ENCODE measurements at regions of chr5 and their contacts with region 1.

Region 1: DNA sequence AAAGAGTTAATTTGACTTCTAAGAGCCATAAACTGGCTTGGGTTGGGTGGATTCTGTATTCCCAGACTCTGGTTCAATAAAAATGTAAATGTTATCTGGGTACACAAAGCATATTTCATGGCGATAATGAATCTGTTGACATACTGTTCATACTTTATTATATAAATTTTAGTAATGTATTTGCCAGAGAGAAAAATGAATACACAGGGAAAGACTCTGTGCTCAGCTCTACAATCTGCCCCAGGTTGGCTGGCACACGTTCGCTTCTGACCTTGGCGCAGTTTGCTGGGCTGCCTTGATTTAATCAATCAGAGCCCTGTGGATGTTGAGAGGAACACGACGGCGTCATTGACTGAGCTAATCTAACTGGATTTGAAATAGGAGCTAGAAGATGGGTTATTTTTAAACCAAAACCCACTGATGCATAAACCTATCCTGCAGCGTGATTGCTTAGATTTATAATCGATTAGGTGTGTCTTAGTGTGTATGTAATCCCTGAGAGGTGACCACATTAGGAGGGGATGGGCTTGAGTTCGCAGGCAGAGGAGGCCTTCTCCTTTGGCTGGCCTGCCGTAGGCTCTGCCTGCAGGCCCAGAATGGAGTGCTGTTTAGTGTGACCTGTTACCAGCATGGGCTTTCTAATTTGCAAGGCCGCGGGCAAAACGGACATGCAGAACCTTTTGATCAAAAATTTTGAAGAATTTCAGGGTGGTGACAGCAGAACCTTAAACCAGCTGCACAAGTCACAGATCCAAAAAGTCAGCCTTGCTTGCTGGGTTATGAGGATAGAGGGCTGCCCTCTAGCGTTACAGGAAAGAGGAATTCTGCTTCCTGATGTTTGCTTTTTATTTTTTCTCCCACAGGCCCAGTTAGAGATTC is 3.9 kb upstream of the ADCY2 start:
- DNase-seq: peak in 1 of 2 donors; percentile 29
- ATAC-seq: peak in 1 of 2 donors; percentile 27
- H3K4me3 ChIP-seq: no peak overlapping the region
- H3K27ac ChIP-seq: peak overlapping the region; percentile 69 to 89 (median 86)
- H3K4me1 ChIP-seq: peaks cover 4 to 16% of the 10 kb centered on the region in 2 donors
- H3K27me3 ChIP-seq: no peaks in the 10 kb centered on the region
- CTCF ChIP-seq: peak; percentile 32 to 72 (median 47)
- POLR2A ChIP-seq: no peak

Region 2: DNA sequence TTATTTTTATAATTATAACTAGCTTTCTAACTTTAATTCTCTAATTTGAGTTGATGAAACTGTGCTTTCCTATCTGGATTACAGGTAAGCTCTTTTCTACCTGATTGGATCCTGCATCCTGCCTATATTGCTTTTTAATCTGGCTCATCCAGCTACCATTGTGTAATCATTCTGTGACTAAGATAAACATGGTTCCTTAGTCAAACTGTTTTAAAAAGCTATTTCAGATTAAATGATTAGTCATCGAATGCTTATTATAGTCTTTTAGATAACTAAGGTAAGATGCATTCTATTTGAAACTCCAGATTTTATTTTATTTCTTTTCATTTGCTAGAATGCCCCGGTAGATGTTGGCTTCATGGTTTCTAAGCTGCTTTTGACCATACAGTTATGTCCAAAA is 1918.8 kb before region 1 on chr5:
- in situ Hi-C with region 1: no loop called
- intact Hi-C with region 1: loop called (anchors 10 kb)
- DNase-seq: no peak
- ATAC-seq: peak in 1 of 2 donors; percentile 54
- H3K4me3 ChIP-seq: no peak overlapping the region
- H3K27ac ChIP-seq: peak overlapping the region in 1 of 4 donors; percentile 58
- H3K4me1 ChIP-seq: no peaks in the 10 kb centered on the region
- H3K27me3 ChIP-seq: no peaks in the 10 kb centered on the region
- CTCF ChIP-seq: no peak
- POLR2A ChIP-seq: no peak

Region 3: GRCh38 chr5:6765612-6766525 is 626.2 kb before region 1 on chr5:
- in situ Hi-C with region 1: loop called in 1 of 4 experiments (anchors 10 kb)
- intact Hi-C with region 1: loop called (anchors 5 kb)
- DNase-seq: peak; percentile 43 to 65
- ATAC-seq: peak; percentile 47 to 68
- H3K4me3 ChIP-seq: no peak overlapping the region
- H3K27ac ChIP-seq: peak overlapping the region; percentile 58 to 81 (median 80)
- H3K4me1 ChIP-seq: peaks cover 16 to 25% of the 10 kb centered on the region in 2 donors
- H3K27me3 ChIP-seq: no peaks in the 10 kb centered on the region
- CTCF ChIP-seq: peak; percentile 58 to 81 (median 79)
- POLR2A ChIP-seq: no peak

Region 4: DNA sequence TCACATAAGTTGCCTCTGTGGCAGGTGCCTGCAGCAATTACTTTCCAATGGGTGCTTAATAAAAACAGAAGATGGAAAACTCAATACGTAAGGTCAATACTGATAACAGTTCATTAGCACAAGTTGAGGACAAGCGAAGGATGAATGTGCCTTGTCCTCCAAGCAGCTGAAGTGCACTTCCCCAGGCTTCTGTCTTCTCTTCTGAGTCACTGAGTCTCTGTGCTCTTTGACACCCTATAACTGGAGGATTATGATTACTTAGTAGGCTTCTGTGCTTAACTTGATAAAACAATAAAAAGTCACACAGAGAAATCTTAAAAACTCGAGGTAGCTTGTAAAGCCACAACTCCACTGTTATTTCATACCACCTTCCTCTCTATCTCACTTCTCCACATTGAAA is 212.7 kb before region 1 on chr5:
- in situ Hi-C with region 1: no loop called
- intact Hi-C with region 1: no loop called
- DNase-seq: no peak
- ATAC-seq: no peak
- H3K4me3 ChIP-seq: no peak overlapping the region
- H3K27ac ChIP-seq: no peak overlapping the region
- H3K4me1 ChIP-seq: no peaks in the 10 kb centered on the region
- H3K27me3 ChIP-seq: no peaks in the 10 kb centered on the region
- CTCF ChIP-seq: no peak
- POLR2A ChIP-seq: no peak

Region 5: DNA sequence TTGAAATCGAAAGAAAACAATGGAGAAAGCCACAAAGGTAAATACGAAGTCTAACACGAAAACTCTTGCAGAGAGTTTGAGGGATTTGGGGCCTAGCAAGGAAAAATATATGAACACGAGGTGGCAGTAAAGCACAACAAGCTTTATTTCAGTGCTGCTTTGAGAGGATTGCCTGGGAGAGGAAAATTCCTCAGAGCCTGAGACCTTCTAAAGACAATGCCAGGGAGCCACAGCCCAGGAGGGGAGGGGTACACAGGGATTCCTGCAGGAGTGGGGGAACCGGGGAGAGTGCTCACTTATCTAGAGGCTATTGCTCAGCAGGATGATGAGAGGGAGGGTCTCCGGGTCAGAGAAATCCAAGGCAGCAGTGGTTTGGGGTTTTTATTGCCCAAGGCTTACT is 131.0 kb before region 1 on chr5:
- in situ Hi-C with region 1: loop called in 1 of 4 experiments (anchors 25 kb)
- intact Hi-C with region 1: loop called (anchors 1 kb)
- DNase-seq: no peak
- ATAC-seq: peak in 1 of 2 donors; percentile 81
- H3K4me3 ChIP-seq: no peak overlapping the region
- H3K27ac ChIP-seq: no peak overlapping the region
- H3K4me1 ChIP-seq: no peaks in the 10 kb centered on the region
- H3K27me3 ChIP-seq: no peaks in the 10 kb centered on the region
- CTCF ChIP-seq: peak; percentile 43 to 64 (median 52)
- POLR2A ChIP-seq: no peak

Region 6: DNA sequence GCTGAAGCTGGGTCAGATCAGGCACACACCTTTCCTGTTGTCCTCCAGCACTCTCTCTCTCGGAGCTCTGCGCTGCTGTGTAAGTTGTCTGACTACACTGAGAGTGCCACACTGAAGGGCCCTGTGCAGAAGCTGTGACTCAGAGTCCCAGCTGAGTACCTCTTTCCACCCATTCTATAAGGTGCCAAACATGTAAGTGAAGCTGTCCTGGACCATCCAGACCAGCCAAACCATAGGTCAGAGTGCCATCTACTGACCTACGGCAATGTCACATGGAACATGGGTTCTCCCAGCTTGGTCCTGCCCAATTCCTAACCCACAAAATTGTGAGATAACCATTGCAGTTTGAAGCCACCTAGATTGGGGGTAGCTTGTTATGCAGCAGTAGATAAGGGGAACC is 72.1 kb after region 1 on chr5:
- in situ Hi-C with region 1: no loop called
- intact Hi-C with region 1: loop called (anchors 1 kb)
- DNase-seq: peak; percentile 44 to 67
- ATAC-seq: peak; percentile 98 to 99
- H3K4me3 ChIP-seq: no peak overlapping the region
- H3K27ac ChIP-seq: peak overlapping the region; percentile 21 to 53 (median 39)
- H3K4me1 ChIP-seq: peaks cover 25 to 36% of the 10 kb centered on the region in 2 donors
- H3K27me3 ChIP-seq: no peaks in the 10 kb centered on the region
- CTCF ChIP-seq: peak in 4 of 5 experiments; percentile 13 to 38 (median 28)
- POLR2A ChIP-seq: no peak

Region 7: GRCh38 chr5:7576023-7576715 is 184.1 kb after region 1 on chr5:
- in situ Hi-C with region 1: no loop called
- intact Hi-C with region 1: loop called (anchors 5 kb)
- DNase-seq: peak; percentile 40 to 71
- ATAC-seq: peak; percentile 94 to 95
- H3K4me3 ChIP-seq: no peak overlapping the region
- H3K27ac ChIP-seq: peak overlapping the region; percentile 10 to 59 (median 29)
- H3K4me1 ChIP-seq: peaks cover 27 to 28% of the 10 kb centered on the region in 2 donors
- H3K27me3 ChIP-seq: no peaks in the 10 kb centered on the region
- CTCF ChIP-seq: no peak
- POLR2A ChIP-seq: no peak

Region 8: GRCh38 chr5:7754992-7755596 is 363.0 kb after region 1 on chr5:
- in situ Hi-C with region 1: loop called in 2 of 4 experiments (anchors 10 to 25 kb)
- intact Hi-C with region 1: loop called (anchors 2 kb)
- DNase-seq: peak in 1 of 2 donors; percentile 58
- ATAC-seq: peak in 1 of 2 donors; percentile 37
- H3K4me3 ChIP-seq: no peak overlapping the region
- H3K27ac ChIP-seq: peak overlapping the region; percentile 67 to 84 (median 76)
- H3K4me1 ChIP-seq: peaks cover 10 to 41% of the 10 kb centered on the region in 2 donors
- H3K27me3 ChIP-seq: no peaks in the 10 kb centered on the region
- CTCF ChIP-seq: peak; percentile 31 to 58 (median 39)
- POLR2A ChIP-seq: no peak

Measured in gastrocnemius medialis (tissue), 4 donors.